ENCODE measurements at regions of chr12 and their contacts with region 1.

Region 1: GRCh38 chr12:50825372-50825838 is 17.3 kb upstream of the TMPRSS12 start:
- DNase-seq: peak; percentile 76
- ATAC-seq: peak; percentile 73
- H3K4me3 ChIP-seq: no peak overlapping the region
- H3K4me3 Mint-ChIP-seq: peak overlapping the region; percentile 27
- H3K27ac ChIP-seq: peak overlapping the region; percentile 2 to 72
- H3K27ac Mint-ChIP-seq: peak overlapping the region; percentile 62
- H3K4me1 ChIP-seq: peaks cover 3% of the 10 kb centered on the region in 2 donors
- H3K4me1 Mint-ChIP-seq: peaks cover 6% of the 10 kb centered on the region
- H3K27me3 ChIP-seq: no peaks in the 10 kb centered on the region
- H3K27me3 Mint-ChIP-seq: no peaks in the 10 kb centered on the region
- CTCF ChIP-seq: peak; percentile 76

Region 2: DNA sequence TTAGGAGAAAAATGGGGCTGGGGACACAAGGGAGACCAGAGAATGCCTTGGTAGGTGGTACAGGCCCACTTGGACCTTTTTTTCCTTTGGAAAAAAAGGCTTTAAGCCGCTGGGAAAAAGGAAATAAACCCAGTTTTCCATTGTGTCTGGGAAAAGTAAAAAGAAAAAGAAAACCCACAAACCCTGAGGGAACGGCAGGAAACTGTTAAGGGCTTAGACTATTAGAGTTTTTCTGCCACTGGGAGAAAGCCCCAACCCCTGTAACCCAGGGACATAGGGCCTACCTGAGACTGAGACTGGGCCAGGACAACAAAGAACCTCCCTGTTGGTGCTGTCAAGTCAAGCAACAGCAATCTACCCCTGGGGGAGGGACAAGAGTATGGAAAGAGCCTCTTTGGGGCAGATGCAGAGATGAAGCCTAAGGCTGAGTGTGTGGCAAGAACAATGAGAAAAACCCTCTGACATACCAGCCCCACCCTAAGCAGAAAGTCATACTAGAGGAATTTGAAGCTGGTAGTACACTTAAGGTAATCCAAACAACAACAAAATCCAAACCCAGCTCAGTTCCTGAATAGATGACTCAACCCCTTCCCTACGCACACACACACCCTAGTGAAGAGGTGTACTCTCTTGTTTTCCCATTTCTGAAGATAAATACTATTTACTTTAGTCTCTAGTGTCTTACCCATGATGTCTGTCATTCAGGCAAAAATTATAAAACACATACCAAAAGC is 38.7 kb before region 1 on chr12:
- CTCF ChIA-PET with region 1: no interaction called
- POLR2A ChIA-PET with region 1: no interaction called
- intact Hi-C with region 1: no loop called
- DNase-seq: no peak
- ATAC-seq: no peak
- H3K4me3 ChIP-seq: no peak overlapping the region
- H3K4me3 Mint-ChIP-seq: no peak overlapping the region
- H3K27ac ChIP-seq: no peak overlapping the region
- H3K27ac Mint-ChIP-seq: peak overlapping the region; percentile 2
- H3K4me1 ChIP-seq: no peaks in the 10 kb centered on the region
- H3K4me1 Mint-ChIP-seq: peaks cover 13% of the 10 kb centered on the region
- H3K27me3 ChIP-seq: no peaks in the 10 kb centered on the region
- H3K27me3 Mint-ChIP-seq: no peaks in the 10 kb centered on the region
- CTCF ChIP-seq: no peak

Region 3: DNA sequence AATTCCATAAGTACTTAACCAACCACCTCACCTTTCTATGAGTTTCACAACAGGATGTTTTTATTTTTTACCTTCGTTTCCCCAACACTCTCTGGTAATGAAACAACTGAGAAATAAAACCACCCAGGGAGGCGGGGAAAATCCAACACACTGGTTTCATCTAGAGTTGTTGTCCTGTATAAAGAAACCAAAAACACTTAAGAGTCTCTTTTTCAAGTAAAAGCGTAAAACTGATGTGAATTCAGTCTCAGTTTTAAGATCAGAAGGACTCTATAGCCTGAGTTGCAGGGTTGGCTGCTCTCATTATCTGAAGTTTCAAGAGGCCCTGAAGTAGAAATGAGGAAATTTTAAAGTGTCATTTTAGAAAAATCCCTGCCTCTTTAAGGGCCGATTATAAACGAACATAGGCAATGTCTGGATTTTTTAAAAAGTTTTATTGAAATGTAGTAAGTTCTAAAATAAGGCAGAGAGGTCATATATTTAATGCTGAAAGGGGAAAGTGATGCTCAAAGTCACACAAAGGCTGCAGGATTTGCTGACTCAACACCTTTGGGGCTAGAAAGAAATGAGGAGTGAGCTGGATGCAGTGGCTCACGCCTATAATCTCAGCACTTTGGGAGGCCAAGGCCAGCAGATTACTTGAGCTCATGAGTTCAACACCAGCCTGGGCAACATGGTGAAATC is 154.1 kb after region 1 on chr12:
- CTCF ChIA-PET with region 1: interaction called, 343 read pairs
- POLR2A ChIA-PET with region 1: no interaction called
- intact Hi-C with region 1: no loop called
- DNase-seq: no peak
- ATAC-seq: no peak
- H3K4me3 ChIP-seq: no peak overlapping the region
- H3K4me3 Mint-ChIP-seq: no peak overlapping the region
- H3K27ac ChIP-seq: no peak overlapping the region
- H3K27ac Mint-ChIP-seq: no peak overlapping the region
- H3K4me1 ChIP-seq: no peaks in the 10 kb centered on the region
- H3K4me1 Mint-ChIP-seq: no peaks in the 10 kb centered on the region
- H3K27me3 ChIP-seq: no peaks in the 10 kb centered on the region
- H3K27me3 Mint-ChIP-seq: no peaks in the 10 kb centered on the region
- CTCF ChIP-seq: no peak

Region 4: DNA sequence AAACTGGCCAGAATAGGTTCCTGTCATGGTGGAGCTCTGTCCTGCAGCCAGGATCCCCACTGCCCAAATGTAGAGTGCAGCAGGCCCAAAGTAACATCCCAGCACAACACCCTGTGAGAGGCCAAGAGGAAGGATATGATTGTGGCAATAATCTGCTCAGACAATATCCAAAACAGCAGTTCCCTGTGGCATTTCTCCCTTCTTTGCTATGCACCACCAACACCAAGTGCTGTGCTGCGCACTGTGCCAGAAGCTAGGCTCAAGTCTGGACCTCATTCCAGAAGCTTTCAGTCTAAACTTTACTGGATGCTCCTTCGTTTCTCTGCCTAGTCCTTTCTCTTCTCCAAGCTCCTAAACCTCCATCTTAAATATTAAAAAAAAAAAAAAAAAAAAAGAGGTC is 167.4 kb after region 1 on chr12:
- CTCF ChIA-PET with region 1: interaction called, 343 read pairs
- POLR2A ChIA-PET with region 1: no interaction called
- intact Hi-C with region 1: no loop called
- DNase-seq: no peak
- ATAC-seq: no peak
- H3K4me3 ChIP-seq: no peak overlapping the region
- H3K4me3 Mint-ChIP-seq: no peak overlapping the region
- H3K27ac ChIP-seq: no peak overlapping the region
- H3K27ac Mint-ChIP-seq: no peak overlapping the region
- H3K4me1 ChIP-seq: no peaks in the 10 kb centered on the region
- H3K4me1 Mint-ChIP-seq: no peaks in the 10 kb centered on the region
- H3K27me3 ChIP-seq: no peaks in the 10 kb centered on the region
- H3K27me3 Mint-ChIP-seq: no peaks in the 10 kb centered on the region
- CTCF ChIP-seq: no peak

Region 5: GRCh38 chr12:51047655-51048540 is 222.5 kb after region 1 on chr12 and contains the start of gene LETMD1:
- CTCF ChIA-PET with region 1: no interaction called
- POLR2A ChIA-PET with region 1: no interaction called
- intact Hi-C with region 1: loop called (anchors 1 kb)
- DNase-seq: peak; percentile 97
- ATAC-seq: peak; percentile 95
- H3K4me3 ChIP-seq: peak within 1 kb of the TSS; percentile 75 to 91 (median 79)
- H3K4me3 Mint-ChIP-seq: peak within 1 kb of the TSS; percentile 96
- H3K27ac ChIP-seq: peak within 1 kb of the TSS; percentile 81
- H3K27ac Mint-ChIP-seq: peak within 1 kb of the TSS; percentile 95
- H3K4me1 ChIP-seq: peaks cover 18 to 22% of the 10 kb centered on the region in 2 donors
- H3K4me1 Mint-ChIP-seq: peaks cover 29% of the 10 kb centered on the region
- H3K27me3 ChIP-seq: no peaks in the 10 kb centered on the region
- H3K27me3 Mint-ChIP-seq: no peaks in the 10 kb centered on the region
- CTCF ChIP-seq: peak; percentile 97
- total RNA-seq, gene LETMD1: 101 and 105 TPM in 2 replicates

Region 6: GRCh38 chr12:51172515-51173431 is 347.4 kb after region 1 on chr12 and contains the start of gene TFCP2:
- CTCF ChIA-PET with region 1: no interaction called
- POLR2A ChIA-PET with region 1: no interaction called
- intact Hi-C with region 1: loop called (anchors 2 kb)
- DNase-seq: peak; percentile 97
- ATAC-seq: peak; percentile 99
- H3K4me3 ChIP-seq: peak within 1 kb of the TSS; percentile 75 to 100 (median 88)
- H3K4me3 Mint-ChIP-seq: peak within 1 kb of the TSS; percentile 83
- H3K27ac ChIP-seq: peak within 1 kb of the TSS; percentile 85 to 96
- H3K27ac Mint-ChIP-seq: peak within 1 kb of the TSS; percentile 77
- H3K4me1 ChIP-seq: peaks cover 16 to 19% of the 10 kb centered on the region in 2 donors
- H3K4me1 Mint-ChIP-seq: peaks cover 15% of the 10 kb centered on the region
- H3K27me3 ChIP-seq: no peaks in the 10 kb centered on the region
- H3K27me3 Mint-ChIP-seq: no peaks in the 10 kb centered on the region
- CTCF ChIP-seq: no peak
- total RNA-seq, gene TFCP2: 37.0 and 38.8 TPM in 2 replicates